ENCODE measurements at regions of chr22 and their contacts with region 1.

Region 1: GRCh38 chr22:43783777-43784176 is 28.3 kb downstream of the EFCAB6 start:
- DNase-seq: no peak
- H3K4me3 ChIP-seq: no peak overlapping the region
- H3K27ac ChIP-seq: no peak overlapping the region
- H3K4me1 ChIP-seq: no peaks in the 10 kb centered on the region
- H3K27me3 ChIP-seq: no peaks in the 10 kb centered on the region; a peak in 1 of 7 replicates
- CTCF ChIP-seq: peak; percentile 50 to 63 (median 51)
- EP300 ChIP-seq: no peak
- POLR2A ChIP-seq: no peak
- RAD21 ChIP-seq: peak; percentile 37 to 52; a peak in 3 of 4 replicates

Region 2: GRCh38 chr22:43796567-43796966 is 12.8 kb after region 1 on chr22:
- CTCF ChIA-PET with region 1: interaction called, 23 read pairs
- POLR2A ChIA-PET with region 1: no interaction called
- DNase-seq: no peak
- H3K4me3 ChIP-seq: no peak overlapping the region
- H3K27ac ChIP-seq: no peak overlapping the region
- H3K4me1 ChIP-seq: peaks cover 0 to 6% (median 0%) of the 10 kb centered on the region in 4 experiments; a peak in 3 of 7 replicates
- H3K27me3 ChIP-seq: no peaks in the 10 kb centered on the region
- CTCF ChIP-seq: peak; percentile 26 to 67 (median 58)
- EP300 ChIP-seq: no peak
- POLR2A ChIP-seq: no peak
- RAD21 ChIP-seq: peak; percentile 74 to 80